ENCODE measurements at regions of chr6 and their contacts with region 1.

Region 1: DNA sequence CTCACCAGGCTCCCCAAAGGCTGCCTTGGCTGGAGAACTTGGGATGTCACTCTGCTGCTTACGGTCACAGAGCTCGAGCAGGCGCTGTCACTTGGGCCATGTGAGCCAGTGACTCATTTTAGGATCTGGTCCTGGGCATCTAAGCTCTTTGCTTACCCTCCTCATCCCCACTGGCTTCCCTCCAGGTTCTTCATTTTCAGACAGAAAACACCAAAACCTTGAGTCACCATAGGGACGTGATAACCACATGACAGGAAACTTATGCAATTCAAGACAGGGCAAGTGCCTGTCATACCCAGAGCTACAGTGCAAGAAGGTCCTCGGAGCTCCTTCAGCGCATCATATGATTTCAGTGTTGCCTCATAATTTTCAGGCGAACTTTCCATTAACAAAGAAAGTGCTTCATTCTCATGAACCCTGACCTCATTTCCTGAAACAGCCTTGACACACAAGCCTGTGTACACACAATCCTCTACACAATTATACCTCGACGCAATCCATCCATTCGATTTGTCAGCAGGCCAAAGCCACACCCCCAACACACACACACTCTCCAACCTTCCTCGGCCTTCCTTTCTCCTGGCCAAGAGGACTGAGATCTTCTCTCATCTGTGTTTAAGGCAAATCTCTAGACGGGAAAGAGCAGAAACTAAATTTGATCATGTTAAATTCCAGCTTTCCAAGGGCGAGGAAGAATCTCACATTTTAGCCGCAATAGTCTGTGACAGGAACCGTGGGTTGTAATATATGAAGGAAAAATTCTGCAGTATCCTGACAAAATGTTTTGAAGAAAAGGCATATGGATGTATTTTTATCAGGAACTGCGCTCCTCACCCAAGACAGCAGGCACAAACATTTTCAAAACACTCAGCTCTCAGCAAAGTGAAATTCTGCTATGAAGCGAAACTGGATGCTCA is 25.3 kb downstream of the TBC1D7 start:
- DNase-seq: peak; percentile 56 to 58
- ATAC-seq: peak; percentile 72 to 76
- H3K4me3 ChIP-seq: peak overlapping the region in 3 of 4 donors; percentile 1 to 26 (median 25)
- H3K27ac ChIP-seq: peak overlapping the region; percentile 38 to 63 (median 59)
- H3K4me1 ChIP-seq: peaks cover 20 to 30% of the 10 kb centered on the region in 2 donors
- H3K27me3 ChIP-seq: no peaks in the 10 kb centered on the region
- CTCF ChIP-seq: no peak
- POLR2A ChIP-seq: no peak

Region 2: DNA sequence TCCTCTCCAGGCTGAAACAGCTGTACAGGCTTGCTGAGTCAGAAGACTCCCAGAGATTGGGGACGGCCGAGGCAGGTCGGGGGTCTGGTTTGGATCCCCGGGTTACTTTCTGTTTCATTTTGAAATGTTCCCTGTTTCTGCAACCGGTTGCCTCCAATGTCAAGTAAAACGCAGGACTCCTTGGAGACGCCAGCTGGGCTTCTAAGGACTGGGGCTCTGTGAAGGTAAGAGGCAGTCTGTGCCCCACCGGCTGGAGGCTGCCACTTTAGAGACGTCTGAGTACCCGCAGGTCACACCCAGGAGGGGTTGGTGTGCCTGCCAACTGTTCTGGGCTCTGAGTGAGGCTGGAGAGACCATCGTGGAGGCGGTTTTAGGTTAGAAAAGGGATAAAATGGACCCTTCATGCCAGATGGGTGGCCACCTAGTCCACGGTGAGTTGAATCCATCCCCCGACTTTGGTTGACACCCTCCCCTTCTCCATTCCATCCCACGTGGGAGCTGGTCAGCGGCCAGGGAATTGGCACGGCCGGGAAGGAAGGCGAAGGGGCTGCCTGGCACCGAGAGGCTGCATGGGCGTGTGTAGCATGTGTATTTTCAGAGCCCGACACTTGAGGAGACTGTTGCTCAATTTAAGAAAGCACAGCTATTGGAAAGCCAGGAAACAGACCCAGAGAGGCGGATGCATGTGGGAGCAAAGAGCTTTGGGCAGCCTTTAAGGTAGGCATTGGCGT is 345.5 kb before region 1 on chr6:
- in situ Hi-C with region 1: no loop called
- intact Hi-C with region 1: loop called (anchors 10 kb)
- DNase-seq: no peak
- ATAC-seq: peak; percentile 77 to 80
- H3K4me3 ChIP-seq: peak overlapping the region; percentile 60 to 69 (median 63)
- H3K27ac ChIP-seq: peak overlapping the region; percentile 24 to 50 (median 45)
- H3K4me1 ChIP-seq: peaks cover 5% of the 10 kb centered on the region in 2 donors
- H3K27me3 ChIP-seq: peaks cover 0 to 18% (median 9%) of the 10 kb centered on the region in 3 donors
- CTCF ChIP-seq: no peak
- POLR2A ChIP-seq: no peak

Region 3: GRCh38 chr6:13383328-13384163 is 80.5 kb after region 1 on chr6:
- in situ Hi-C with region 1: no loop called
- intact Hi-C with region 1: no loop called
- DNase-seq: no peak
- ATAC-seq: peak; percentile 39 to 63
- H3K4me3 ChIP-seq: no peak overlapping the region
- H3K27ac ChIP-seq: no peak overlapping the region
- H3K4me1 ChIP-seq: peaks cover 22 to 32% of the 10 kb centered on the region in 2 donors
- H3K27me3 ChIP-seq: no peaks in the 10 kb centered on the region
- CTCF ChIP-seq: peak in 3 of 5 experiments; percentile 12 to 27 (median 24)
- POLR2A ChIP-seq: no peak

Measured in gastrocnemius medialis (tissue), 4 donors.